ENCODE measurements at regions of chr12 and their contacts with region 1.

Region 1: DNA sequence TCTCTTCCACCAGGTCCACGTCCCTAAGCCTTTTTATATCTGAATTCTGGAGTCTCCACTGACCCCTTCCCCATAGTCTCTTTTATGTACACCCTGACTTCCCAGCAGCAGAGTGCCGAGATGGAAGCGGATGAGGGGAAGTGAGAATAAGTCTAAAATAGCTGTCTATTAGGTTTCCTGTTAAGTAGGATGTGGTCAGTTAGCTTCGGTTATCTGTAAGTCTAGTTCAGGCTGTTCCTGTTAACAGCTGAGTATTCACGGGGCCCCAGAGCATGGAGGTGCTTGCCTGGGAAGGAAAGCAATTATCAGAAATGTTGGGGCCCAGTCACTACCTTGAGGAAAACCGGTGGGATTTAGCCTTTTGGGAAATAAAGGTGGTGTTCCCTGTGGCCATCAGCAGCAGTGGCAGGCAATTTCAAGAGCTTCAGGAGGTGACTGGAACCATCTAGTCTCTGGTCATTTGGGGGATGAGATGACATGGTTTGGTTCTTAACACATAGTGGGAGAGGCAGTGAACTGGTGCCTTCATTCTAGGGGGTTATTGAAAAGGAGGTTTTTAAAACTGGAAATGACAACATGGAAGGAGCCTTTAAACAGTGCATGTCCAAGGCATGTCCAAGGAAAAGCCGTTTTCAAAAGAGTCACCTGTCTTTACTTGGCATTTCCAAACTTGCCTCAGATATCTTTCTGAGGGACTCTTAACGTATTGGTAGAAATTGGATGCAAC is 21.8 kb downstream of the CHST11 start:
- DNase-seq: no peak
- ATAC-seq: peak; percentile 84
- H3K4me3 Mint-ChIP-seq: peak overlapping the region; percentile 87
- H3K27ac Mint-ChIP-seq: peak overlapping the region; percentile 90
- H3K4me1 Mint-ChIP-seq: peaks cover 92% of the 10 kb centered on the region
- H3K27me3 Mint-ChIP-seq: no peaks in the 10 kb centered on the region
- CTCF ChIP-seq: no peak

Region 2: DNA sequence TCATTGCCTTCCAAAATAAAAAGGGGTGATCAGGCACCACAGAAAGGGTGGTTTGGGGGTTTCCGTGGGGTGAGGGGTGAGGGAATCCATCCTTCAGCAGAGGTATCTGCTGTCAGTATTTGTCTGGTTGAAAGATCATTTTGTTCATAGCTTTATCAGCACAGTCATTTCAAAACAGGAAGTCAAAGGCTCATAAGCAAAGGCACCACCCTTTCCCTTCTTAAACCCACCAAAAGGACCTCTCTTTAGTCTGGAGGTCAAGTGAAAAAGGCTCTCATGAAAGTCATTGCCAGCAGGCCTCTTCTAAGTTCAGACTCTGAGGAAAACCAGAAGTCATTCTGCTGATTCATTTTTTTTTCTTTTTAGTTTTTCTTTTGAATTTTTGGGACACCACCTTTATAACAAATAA is 15.6 kb before region 1 on chr12:
- CTCF ChIA-PET with region 1: interaction called, 8 read pairs
- POLR2A ChIA-PET with region 1: interaction called, 64 read pairs
- intact Hi-C with region 1: loop called (anchors 1 kb)
- DNase-seq: no peak
- ATAC-seq: peak; percentile 61
- H3K4me3 Mint-ChIP-seq: peak overlapping the region; percentile 67
- H3K27ac Mint-ChIP-seq: peak overlapping the region; percentile 91
- H3K4me1 Mint-ChIP-seq: peaks cover 88% of the 10 kb centered on the region
- H3K27me3 Mint-ChIP-seq: no peaks in the 10 kb centered on the region
- CTCF ChIP-seq: no peak

Region 3: DNA sequence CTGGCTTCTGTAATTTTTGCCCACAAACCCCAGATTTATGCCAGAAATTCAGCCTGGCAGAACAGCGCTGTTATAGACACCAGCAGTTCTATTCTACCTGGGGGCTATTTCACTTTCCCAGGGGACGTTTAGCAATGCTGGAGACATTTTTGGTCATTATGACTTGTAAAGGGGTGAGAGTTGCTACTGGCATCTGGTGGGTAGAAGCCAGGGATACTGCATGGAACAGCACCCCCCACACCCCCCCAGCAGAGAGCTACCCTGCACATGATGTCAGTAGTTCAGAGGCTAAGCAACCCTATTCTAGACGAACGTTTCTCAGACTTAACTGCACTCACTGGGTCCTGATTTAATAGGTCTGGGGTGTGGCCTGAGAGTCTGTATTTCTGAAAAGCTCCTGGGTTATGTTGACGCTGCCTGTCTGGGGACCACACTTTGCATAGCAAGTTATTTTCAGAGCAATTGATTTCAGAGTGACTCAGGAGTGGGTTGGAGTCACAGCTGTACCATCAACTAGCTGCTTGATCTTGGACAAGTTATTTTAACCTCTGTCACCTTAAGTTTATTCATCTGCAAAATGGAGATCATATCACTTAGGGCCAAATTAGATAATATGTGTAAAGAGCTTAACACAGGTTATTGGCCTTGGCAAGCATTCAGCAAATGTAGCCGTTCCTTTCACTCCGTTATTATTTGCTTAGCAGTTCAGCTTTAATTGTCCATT is 26.7 kb after region 1 on chr12:
- CTCF ChIA-PET with region 1: no interaction called
- POLR2A ChIA-PET with region 1: interaction called, 6 read pairs
- intact Hi-C with region 1: loop called (anchors 1 kb)
- DNase-seq: no peak
- ATAC-seq: peak; percentile 90
- H3K4me3 Mint-ChIP-seq: peak overlapping the region; percentile 21
- H3K27ac Mint-ChIP-seq: no peak overlapping the region
- H3K4me1 Mint-ChIP-seq: peaks cover 96% of the 10 kb centered on the region
- H3K27me3 Mint-ChIP-seq: no peaks in the 10 kb centered on the region
- CTCF ChIP-seq: no peak

Region 4: DNA sequence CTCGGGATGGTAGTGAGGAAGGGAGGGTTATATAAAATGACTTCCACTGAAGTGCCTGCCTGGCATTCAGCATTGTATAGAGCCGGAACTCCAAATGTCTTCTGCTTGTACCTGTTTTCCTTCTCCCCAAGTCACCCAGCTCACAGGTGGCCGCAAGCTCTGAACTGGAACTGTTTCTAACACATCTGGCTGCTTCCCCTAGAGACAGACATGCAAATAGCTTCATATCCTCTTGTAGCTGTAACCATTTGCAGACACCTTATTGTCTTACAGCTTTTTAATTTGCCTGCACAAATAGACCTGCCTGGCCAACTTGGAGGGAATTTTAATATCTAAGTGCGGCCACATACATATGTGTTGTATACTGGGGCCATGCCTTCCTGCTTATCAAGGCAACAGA is 104.2 kb after region 1 on chr12:
- CTCF ChIA-PET with region 1: no interaction called
- POLR2A ChIA-PET with region 1: interaction called, 7 read pairs
- intact Hi-C with region 1: loop called (anchors 5 kb)
- DNase-seq: peak; percentile 26
- ATAC-seq: peak; percentile 86
- H3K4me3 Mint-ChIP-seq: peak overlapping the region; percentile 56
- H3K27ac Mint-ChIP-seq: peak overlapping the region; percentile 70
- H3K4me1 Mint-ChIP-seq: peaks cover 89% of the 10 kb centered on the region
- H3K27me3 Mint-ChIP-seq: no peaks in the 10 kb centered on the region
- CTCF ChIP-seq: no peak

Region 5: DNA sequence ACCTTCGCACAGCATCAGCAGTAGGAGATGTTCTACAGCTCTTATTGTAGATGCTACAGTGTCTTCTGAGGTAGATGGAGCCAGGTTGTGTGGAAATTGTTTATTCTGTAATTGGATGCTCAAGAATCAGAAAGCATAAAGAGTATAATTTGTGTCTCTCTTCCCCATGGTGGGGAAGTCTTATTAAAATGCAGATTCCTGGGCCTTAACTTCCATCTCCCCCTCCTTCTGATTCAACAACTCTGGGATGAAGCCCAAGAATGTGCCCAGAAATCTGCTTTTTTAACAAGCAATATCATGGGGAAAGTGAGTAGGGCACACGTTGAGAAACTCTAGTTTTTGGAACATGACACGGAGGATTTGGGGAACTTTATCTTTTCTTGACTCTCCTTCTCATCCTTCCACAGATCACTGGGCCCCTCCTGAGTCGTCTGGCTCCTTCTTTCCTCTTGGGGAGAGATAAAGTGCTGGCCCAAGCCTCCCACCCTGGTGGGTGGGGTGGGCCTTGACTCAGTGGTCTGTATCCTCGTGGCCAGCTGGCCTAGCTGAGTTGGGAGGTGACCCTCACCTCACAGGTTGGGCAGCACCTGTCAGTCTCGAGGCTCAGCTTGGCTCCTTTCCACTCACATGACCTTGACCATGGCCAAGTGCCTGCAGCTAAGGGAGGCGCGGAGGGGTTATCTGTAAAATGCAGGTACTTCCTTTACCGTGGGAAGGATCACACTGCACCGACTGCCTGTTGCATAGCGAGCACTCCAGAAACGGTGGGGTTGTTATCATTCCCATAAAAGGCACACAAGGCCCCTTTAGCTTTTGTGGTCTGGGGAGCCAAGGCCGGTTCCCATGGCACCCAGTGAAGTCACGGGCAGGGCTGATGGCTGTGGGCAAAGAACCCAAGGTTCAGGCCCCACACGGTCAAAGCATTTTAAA is 120.0 kb after region 1 on chr12:
- CTCF ChIA-PET with region 1: no interaction called
- POLR2A ChIA-PET with region 1: no interaction called
- intact Hi-C with region 1: no loop called
- DNase-seq: no peak
- ATAC-seq: no peak
- H3K4me3 Mint-ChIP-seq: no peak overlapping the region
- H3K27ac Mint-ChIP-seq: peak overlapping the region; percentile 38
- H3K4me1 Mint-ChIP-seq: peaks cover 95% of the 10 kb centered on the region
- H3K27me3 Mint-ChIP-seq: no peaks in the 10 kb centered on the region
- CTCF ChIP-seq: no peak